Left cardiac atrium (tissue), 4 donors: ENCODE measurements at regions of chr9 and their contacts with region 1.

Region 1: DNA sequence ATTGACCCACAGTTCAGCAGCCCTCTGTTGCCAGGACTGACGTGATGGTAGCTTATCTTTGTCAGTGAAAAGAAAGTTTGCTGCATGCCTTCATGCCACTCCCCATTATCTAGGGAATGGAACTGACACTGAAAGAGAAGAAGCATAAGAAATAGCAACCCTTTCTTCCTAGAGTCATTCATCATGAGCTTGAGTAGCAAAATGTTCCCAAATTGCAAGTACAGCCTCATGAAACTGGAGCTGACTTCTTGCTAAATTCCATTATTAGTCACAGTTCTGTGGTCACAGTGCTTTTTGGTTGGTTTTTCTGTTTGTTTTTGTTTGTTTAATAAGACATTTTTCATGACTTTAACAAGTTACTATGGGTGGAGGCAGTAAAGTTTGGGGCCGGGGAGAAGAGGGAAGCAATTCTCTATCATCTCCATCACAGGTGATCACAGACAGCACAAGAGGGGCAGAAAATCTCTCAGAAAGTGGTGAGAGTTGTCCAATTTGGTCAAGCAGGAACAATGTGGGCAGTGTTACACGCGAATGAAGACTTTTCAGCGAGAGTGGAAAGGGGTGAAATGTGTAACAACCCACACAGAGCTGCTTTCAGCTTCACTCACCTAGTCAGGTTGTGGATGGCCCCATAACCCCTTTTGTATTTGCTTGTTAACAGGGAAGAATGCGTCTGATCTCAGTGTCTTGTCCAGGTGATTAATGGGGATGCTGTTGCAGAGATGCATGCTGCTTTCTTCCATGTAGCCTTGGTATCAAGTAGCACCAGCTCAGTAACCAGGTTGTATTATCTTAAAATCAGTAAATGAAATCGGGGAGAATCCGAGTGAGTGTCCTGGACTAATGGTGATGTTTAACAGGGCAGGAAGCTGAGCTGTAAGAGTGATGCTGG is 440.4 kb downstream of the DMRT2 start:
- DNase-seq: no peak
- ATAC-seq: no peak

Region 2: DNA sequence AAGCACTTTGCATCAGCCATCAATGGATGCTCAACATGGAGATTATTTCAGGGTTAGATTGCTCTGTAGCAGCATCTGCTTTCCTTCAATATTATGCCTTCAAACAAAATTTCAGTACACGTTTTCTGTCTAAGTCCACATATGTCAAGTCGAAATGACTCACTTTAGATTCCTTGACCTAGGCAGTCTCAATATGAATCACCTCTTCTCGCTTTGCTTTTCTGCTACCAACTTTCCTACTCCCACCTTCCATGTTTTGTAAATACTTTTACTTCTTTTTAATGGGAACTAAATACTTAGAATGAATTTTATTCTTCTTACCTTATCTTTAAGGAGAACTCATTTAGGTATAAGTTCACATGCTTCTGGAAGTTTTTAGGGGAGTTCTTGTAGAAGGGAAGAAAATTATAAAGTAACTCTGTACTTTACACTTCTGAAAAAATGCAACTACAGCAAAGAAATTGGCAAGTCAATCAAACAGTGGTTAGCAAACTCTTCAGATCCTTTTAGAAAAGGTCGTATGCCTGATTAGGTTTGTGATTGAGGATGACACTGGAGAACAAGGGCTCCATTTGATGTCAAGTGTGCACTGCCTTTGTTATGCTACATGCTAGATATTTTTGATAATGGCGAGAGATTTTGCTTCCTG is 46.1 kb after region 1 on chr9:
- intact Hi-C with region 1: loop called in 1 of 2 experiments (anchors 10 kb)
- DNase-seq: no peak
- ATAC-seq: no peak

Region 3: GRCh38 chr9:1960342-1961042 is 469.9 kb after region 1 on chr9:
- intact Hi-C with region 1: no loop called
- DNase-seq: no peak
- ATAC-seq: peak in 1 of 2 donors; percentile 40